ENCODE measurements at regions of chr4 and their contacts with region 1.

Region 1: GRCh38 chr4:153153339-153153871 is 50.8 kb upstream of the TRIM2 start:
- DNase-seq: peak; percentile 89
- ATAC-seq: peak; percentile 89
- H3K4me3 Mint-ChIP-seq: peak overlapping the region; percentile 74
- H3K27ac Mint-ChIP-seq: peak overlapping the region; percentile 80
- H3K4me1 Mint-ChIP-seq: peaks cover 50% of the 10 kb centered on the region
- H3K27me3 Mint-ChIP-seq: peaks cover 10% of the 10 kb centered on the region

Region 2: GRCh38 chr4:153095448-153096204 is 57.8 kb before region 1 on chr4:
- CTCF ChIA-PET with region 1: no interaction called
- POLR2A ChIA-PET with region 1: no interaction called
- intact Hi-C with region 1: no loop called
- DNase-seq: no peak
- ATAC-seq: no peak
- H3K4me3 Mint-ChIP-seq: no peak overlapping the region
- H3K27ac Mint-ChIP-seq: no peak overlapping the region
- H3K4me1 Mint-ChIP-seq: peaks cover 4% of the 10 kb centered on the region
- H3K27me3 Mint-ChIP-seq: no peaks in the 10 kb centered on the region

Region 3: DNA sequence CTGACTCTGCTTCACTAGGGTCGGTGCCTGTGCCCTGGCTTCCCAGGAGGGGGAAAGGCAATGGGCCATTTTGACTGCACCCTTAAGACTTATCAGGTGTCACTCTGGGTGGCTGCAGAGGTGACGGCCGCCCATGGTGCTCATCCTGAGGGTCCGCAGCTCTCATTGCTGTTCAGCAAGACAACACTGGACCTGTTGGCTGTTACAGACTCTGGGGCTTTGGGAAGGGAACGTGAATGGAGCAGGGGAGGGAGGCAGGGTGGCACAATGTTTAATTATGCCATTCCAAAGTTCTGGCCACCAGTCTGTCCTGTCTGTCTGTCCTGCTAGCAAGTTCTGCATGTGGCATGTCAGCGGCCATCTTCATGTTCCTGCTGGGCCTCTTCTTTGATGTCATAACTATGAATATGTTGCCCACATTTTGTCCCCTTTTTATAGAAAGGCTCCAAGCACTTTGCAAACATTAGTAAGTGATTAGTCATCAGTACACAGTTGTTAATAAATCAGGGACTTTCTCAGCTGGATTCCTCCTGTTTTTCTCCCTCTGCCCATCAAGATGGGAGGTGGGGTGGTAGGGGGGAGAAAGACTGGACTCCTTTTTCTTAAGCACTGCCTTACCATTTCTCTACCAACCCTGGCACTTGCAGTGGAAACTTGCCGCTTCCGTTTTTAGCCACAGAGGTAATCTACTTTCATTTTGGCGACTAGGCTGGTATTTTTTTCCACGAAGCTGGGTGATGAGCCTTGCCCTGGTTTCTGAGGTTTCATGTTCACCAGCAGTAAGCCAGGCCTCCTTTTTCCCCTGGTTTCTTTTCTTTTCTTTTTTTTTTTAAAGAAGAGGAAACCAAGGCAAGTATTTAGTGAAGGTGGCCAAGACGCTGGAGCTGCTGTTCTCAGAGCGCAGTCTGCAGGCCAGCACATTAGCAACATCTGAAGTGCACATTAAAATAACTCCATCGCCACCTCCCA is 37.8 kb before region 1 on chr4:
- CTCF ChIA-PET with region 1: interaction called, 3 read pairs
- POLR2A ChIA-PET with region 1: no interaction called
- intact Hi-C with region 1: loop called in 1 of 2 experiments (anchors 1 kb)
- DNase-seq: peak; percentile 87
- ATAC-seq: peak; percentile 59
- H3K4me3 Mint-ChIP-seq: no peak overlapping the region
- H3K27ac Mint-ChIP-seq: no peak overlapping the region
- H3K4me1 Mint-ChIP-seq: peaks cover 2% of the 10 kb centered on the region
- H3K27me3 Mint-ChIP-seq: no peaks in the 10 kb centered on the region

Region 4: DNA sequence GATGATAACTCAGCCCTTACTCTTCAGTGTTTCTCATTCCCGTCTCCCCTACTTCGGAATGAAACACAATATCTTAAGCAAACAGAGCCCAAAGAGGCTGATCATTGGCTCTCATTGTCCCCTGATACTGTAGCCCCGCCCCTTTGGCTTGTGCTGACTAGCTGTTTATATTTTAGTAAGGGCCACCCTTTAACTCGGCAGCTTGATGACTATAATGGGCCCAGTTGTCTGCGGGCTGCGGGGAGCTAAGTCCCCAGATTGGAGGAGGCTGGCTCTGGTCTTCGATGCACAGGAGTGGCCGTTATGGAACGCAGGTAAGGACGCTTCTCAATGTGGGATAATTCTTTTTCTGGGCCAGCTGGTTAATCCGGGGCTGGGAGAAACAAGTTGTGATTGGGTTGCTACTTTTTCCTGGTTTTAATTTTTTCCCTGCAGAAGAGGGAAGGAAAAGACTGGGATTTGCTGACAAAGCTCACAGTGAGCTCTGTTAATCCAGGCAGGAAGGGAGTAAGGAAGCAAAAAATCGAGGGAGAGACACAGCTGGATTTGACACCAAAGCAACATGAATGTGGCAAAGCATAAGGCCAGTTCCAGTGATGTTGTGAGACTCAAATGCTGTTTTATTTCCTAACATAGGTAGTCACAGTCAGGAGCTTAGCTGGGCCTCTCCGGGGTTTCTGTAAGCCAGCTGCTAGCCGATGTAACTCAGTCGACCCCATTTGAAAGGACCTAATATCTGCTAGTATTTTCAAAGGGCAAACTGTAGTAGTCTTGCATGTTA is 51.0 kb after region 1 on chr4 and contains the start of gene TRIM2:
- CTCF ChIA-PET with region 1: no interaction called
- POLR2A ChIA-PET with region 1: no interaction called
- intact Hi-C with region 1: loop called in 1 of 2 experiments (anchors 5 kb)
- DNase-seq: peak; percentile 20
- ATAC-seq: no peak
- H3K4me3 Mint-ChIP-seq: peak within 1 kb of the TSS; percentile 32
- H3K27ac Mint-ChIP-seq: peak within 1 kb of the TSS; percentile 62
- H3K4me1 Mint-ChIP-seq: peaks cover 33% of the 10 kb centered on the region
- H3K27me3 Mint-ChIP-seq: no peaks in the 10 kb centered on the region
- total RNA-seq, gene TRIM2: 1.0 to 1.6 TPM

Region 5: GRCh38 chr4:153221783-153222706 is 68.6 kb after region 1 on chr4:
- CTCF ChIA-PET with region 1: interaction called, 3 read pairs
- POLR2A ChIA-PET with region 1: no interaction called
- intact Hi-C with region 1: loop called (anchors 2 to 5 kb)
- DNase-seq: peak; percentile 64
- ATAC-seq: peak; percentile 87
- H3K4me3 Mint-ChIP-seq: peak overlapping the region; percentile 76
- H3K27ac Mint-ChIP-seq: peak overlapping the region; percentile 71
- H3K4me1 Mint-ChIP-seq: peaks cover 35% of the 10 kb centered on the region
- H3K27me3 Mint-ChIP-seq: peaks cover 6% of the 10 kb centered on the region

Region 6: GRCh38 chr4:153249199-153250041 is 96.0 kb after region 1 on chr4:
- CTCF ChIA-PET with region 1: interaction called, 4 read pairs
- POLR2A ChIA-PET with region 1: no interaction called
- intact Hi-C with region 1: loop called (anchors 1 to 2 kb)
- DNase-seq: peak; percentile 91
- ATAC-seq: peak; percentile 98
- H3K4me3 Mint-ChIP-seq: peak overlapping the region; percentile 71
- H3K27ac Mint-ChIP-seq: peak overlapping the region; percentile 63
- H3K4me1 Mint-ChIP-seq: peaks cover 11% of the 10 kb centered on the region
- H3K27me3 Mint-ChIP-seq: no peaks in the 10 kb centered on the region

Region 7: GRCh38 chr4:153426207-153426885 is 272.9 kb after region 1 on chr4:
- CTCF ChIA-PET with region 1: no interaction called
- POLR2A ChIA-PET with region 1: no interaction called
- intact Hi-C with region 1: loop called in 1 of 2 experiments (anchors 5 kb)
- DNase-seq: no peak
- ATAC-seq: peak; percentile 56
- H3K4me3 Mint-ChIP-seq: no peak overlapping the region
- H3K27ac Mint-ChIP-seq: no peak overlapping the region
- H3K4me1 Mint-ChIP-seq: peaks cover 61% of the 10 kb centered on the region
- H3K27me3 Mint-ChIP-seq: no peaks in the 10 kb centered on the region

Region 8: DNA sequence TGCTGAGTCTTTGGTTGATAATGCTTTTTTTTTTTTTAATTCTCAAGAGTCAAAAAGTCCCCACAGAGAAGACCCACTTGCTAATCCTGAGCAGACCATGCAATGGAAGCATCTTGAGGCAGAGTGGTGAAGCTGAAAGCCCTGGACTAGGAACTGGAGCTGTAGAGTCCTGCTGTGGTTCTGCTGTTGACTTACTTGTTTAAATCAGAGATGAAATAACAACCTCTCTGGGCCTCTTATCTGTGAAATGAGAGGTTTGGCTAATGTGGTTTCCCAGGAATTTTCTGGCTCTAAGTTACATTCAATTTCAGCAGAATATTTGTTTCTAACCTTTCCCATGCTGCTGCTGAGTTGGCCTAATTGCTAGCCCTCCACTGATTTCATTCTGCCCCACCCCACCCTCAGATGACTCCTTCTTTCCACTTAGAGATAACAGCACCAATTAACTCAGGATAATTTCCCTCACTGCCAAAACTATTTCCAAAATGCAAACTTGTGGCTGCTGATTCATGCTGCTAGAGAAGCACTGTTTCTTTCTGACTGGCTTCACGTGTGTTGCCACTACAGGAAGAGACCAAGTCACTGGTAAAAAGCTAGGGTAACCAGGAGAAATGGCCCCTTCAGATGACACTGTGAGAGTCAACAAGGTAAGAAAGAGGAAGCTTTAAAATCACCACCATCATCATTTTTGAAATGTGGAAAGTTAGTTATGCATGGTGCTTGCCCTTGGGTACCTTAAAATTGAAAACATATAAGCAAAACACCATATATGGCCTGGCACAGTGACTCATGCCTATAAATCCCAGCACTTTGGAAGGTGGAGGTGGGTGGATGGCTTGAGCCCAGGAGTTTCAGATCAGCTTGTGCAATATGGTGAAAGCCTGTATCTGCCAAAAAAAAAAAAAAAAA is 1011.8 kb after region 1 on chr4:
- CTCF ChIA-PET with region 1: no interaction called
- POLR2A ChIA-PET with region 1: no interaction called
- intact Hi-C with region 1: loop called in 1 of 2 experiments (anchors 10 kb)
- DNase-seq: peak; percentile 64
- ATAC-seq: peak; percentile 92
- H3K4me3 Mint-ChIP-seq: peak overlapping the region; percentile 1
- H3K27ac Mint-ChIP-seq: peak overlapping the region; percentile 47
- H3K4me1 Mint-ChIP-seq: peaks cover 24% of the 10 kb centered on the region
- H3K27me3 Mint-ChIP-seq: peaks cover 22% of the 10 kb centered on the region